ENCODE measurements at regions of chr20 and their contacts with region 1.

Region 1: DNA sequence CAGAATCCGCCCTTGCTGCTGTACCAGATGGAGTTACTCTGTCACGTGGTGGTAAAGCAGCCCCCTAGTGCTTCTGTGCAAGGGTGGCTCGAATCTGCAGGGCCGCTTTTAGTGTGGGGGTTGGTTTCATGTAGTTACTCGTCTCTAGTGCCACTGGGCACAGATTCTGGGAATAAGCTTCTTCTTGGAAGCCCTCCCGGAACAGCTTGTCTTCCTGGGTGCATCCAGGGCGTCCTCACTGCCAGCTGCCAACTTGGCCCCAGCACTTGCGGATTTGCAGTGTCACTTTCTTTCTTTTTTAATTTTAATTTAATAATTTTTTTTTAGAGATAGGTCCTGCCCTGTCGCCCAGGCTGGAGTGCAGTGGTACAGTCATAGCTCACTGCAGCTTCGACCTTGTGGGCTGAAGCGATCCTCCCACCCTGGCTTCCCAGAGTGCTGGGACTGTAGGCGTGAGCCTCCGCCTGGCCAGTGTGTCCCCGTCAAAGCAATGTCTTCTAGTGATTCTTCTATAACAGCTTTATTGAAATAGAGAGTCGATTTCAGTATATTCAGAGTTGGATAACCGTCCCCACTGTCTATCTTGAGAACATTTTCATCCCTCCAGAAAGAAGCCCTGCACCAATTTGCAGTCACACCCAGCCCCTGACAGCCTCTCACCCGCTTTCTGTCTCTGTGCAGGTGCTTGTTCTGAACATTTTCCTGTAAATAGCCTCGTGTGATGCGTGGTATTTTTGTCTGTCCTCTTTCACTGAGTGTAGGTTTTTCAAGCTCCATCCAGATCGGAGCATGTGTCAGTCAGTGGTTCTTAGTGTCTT is 25.9 kb downstream of the PYGB start:
- DNase-seq: peak in 1 of 3 donors; percentile 29
- ATAC-seq: no peak
- H3K4me3 ChIP-seq: no peak overlapping the region
- H3K27ac ChIP-seq: no peak overlapping the region
- H3K4me1 ChIP-seq: no peaks in the 10 kb centered on the region
- H3K27me3 ChIP-seq: no peaks in the 10 kb centered on the region
- CTCF ChIP-seq: no peak
- POLR2A ChIP-seq: no peak

Region 2: GRCh38 chr20:25195014-25195961 is 78.5 kb before region 1 on chr20 and contains the start of gene ENTPD6:
- intact Hi-C with region 1: loop called in 1 of 2 experiments (anchors 10 kb)
- DNase-seq: peak; percentile 94 to 95 (median 94)
- ATAC-seq: peak; percentile 94 to 96 (median 96)
- H3K4me3 ChIP-seq: peak within 1 kb of the TSS; percentile 72 to 94 (median 88)
- H3K27ac ChIP-seq: peak within 1 kb of the TSS; percentile 80 to 85 (median 84)
- H3K4me1 ChIP-seq: peaks cover 0 to 7% (median 3%) of the 10 kb centered on the region in 4 donors
- H3K27me3 ChIP-seq: no peaks in the 10 kb centered on the region
- CTCF ChIP-seq: peak in 2 of 4 donors; percentile 14 to 23
- POLR2A ChIP-seq: peak; percentile 70
- total RNA-seq, gene ENTPD6: 28.8 to 48.4 (median 34.6) TPM

Region 3: GRCh38 chr20:25318471-25319240 is 44.9 kb after region 1 on chr20:
- intact Hi-C with region 1: no loop called
- DNase-seq: peak in 1 of 3 donors; percentile 31
- ATAC-seq: peak; percentile 34 to 63 (median 48)
- H3K4me3 ChIP-seq: no peak overlapping the region
- H3K27ac ChIP-seq: no peak overlapping the region
- H3K4me1 ChIP-seq: no peaks in the 10 kb centered on the region
- H3K27me3 ChIP-seq: no peaks in the 10 kb centered on the region
- CTCF ChIP-seq: no peak
- POLR2A ChIP-seq: no peak